Posterior vena cava (tissue), 2 donors: ENCODE measurements at regions of chr4 and their contacts with region 1.

Region 1: GRCh38 chr4:148477276-148477675 is 35.1 kb upstream of the NR3C2 start:
- DNase-seq: no peak

Region 2: DNA sequence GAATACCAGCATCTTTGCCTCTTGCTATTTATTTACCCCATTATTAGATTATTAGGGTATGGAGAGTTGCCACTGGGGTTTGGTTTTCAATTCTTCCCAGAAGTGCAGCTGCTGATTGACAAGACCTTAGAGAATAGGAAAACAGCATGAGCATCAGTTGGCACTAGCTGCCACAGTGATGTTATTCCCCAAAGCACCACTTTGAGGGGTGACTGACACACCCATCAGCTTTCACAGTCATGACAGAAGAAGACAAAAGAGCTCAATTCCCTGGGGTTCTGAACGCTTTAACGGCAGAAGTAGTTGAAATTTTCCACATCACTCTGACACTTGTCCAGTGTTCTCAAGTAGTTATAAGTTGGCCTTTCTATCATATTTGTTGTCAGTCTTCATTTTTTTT is 20.0 kb after region 1 on chr4:
- intact Hi-C with region 1: loop called in 1 of 2 experiments (anchors 1 kb)
- DNase-seq: no peak